H1 (cell line): ENCODE measurements at regions of chr10 and their contacts with region 1.

Region 1: GRCh38 chr10:80855348-80855971 is 317.8 kb downstream of the SH2D4B start:
- DNase-seq: peak; percentile 53 to 77
- H3K4me3 ChIP-seq: no peak overlapping the region
- H3K27ac ChIP-seq: no peak overlapping the region
- H3K4me1 ChIP-seq: no peaks in the 10 kb centered on the region; a peak in 3 of 7 replicates
- H3K27me3 ChIP-seq: no peaks in the 10 kb centered on the region
- CTCF ChIP-seq: peak; percentile 78 to 83 (median 78)
- EP300 ChIP-seq: no peak
- POLR2A ChIP-seq: no peak
- RAD21 ChIP-seq: peak; percentile 74 to 80

Region 2: GRCh38 chr10:80662577-80663261 is 192.7 kb before region 1 on chr10:
- CTCF ChIA-PET with region 1: interaction called, 22 read pairs
- POLR2A ChIA-PET with region 1: no interaction called
- DNase-seq: peak; percentile 75 to 98
- H3K4me3 ChIP-seq: peak overlapping the region in 3 of 4 experiments; percentile 21 to 51 (median 43); a peak in 5 of 8 replicates
- H3K27ac ChIP-seq: no peak overlapping the region
- H3K4me1 ChIP-seq: peaks cover 0 to 4% (median 3%) of the 10 kb centered on the region in 4 experiments; a peak in 3 of 7 replicates
- H3K27me3 ChIP-seq: peaks cover 0 to 2% (median 0%) of the 10 kb centered on the region in 4 experiments; a peak in 2 of 7 replicates
- CTCF ChIP-seq: peak; percentile 83 to 88 (median 86)
- EP300 ChIP-seq: no peak
- POLR2A ChIP-seq: no peak
- RAD21 ChIP-seq: peak; percentile 79 to 82

Region 3: DNA sequence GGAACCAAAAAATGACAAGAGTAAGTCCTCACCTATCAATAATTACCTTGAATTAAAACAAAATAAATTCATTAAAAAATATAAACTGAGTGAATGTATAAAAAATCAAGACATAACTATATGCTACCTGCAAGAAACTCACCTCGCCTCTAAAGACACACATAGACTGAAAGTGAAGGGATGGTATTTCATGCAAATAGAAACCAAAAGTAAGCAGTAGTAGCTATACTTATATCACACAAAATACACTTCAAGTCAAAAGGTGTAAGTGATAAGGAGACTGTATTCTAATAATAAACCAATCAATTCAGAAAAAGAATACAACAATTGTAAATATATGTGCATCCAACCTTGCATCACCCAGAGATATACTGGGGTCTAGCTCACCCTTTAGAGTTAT is 14.8 kb after region 1 on chr10:
- CTCF ChIA-PET with region 1: interaction called, 21 read pairs
- POLR2A ChIA-PET with region 1: no interaction called
- DNase-seq: no peak
- H3K4me3 ChIP-seq: no peak overlapping the region
- H3K27ac ChIP-seq: no peak overlapping the region
- H3K4me1 ChIP-seq: no peaks in the 10 kb centered on the region
- H3K27me3 ChIP-seq: no peaks in the 10 kb centered on the region
- CTCF ChIP-seq: no peak
- EP300 ChIP-seq: no peak
- POLR2A ChIP-seq: no peak
- RAD21 ChIP-seq: no peak

Region 4: GRCh38 chr10:80894797-80895467 is 39.5 kb after region 1 on chr10:
- CTCF ChIA-PET with region 1: interaction called, 30 read pairs
- POLR2A ChIA-PET with region 1: no interaction called
- DNase-seq: peak in 1 of 2 experiments; percentile 71
- H3K4me3 ChIP-seq: peak overlapping the region in 3 of 4 experiments; percentile 0 to 31 (median 11); a peak in 4 of 8 replicates
- H3K27ac ChIP-seq: no peak overlapping the region
- H3K4me1 ChIP-seq: peaks cover 9 to 18% (median 12%) of the 10 kb centered on the region in 4 experiments
- H3K27me3 ChIP-seq: peaks cover 11 to 58% (median 42%) of the 10 kb centered on the region in 4 experiments
- CTCF ChIP-seq: no peak
- EP300 ChIP-seq: no peak
- POLR2A ChIP-seq: no peak
- RAD21 ChIP-seq: no peak

Region 5: GRCh38 chr10:80909254-80909653 is 53.8 kb after region 1 on chr10:
- CTCF ChIA-PET with region 1: interaction called, 18 read pairs
- POLR2A ChIA-PET with region 1: no interaction called
- DNase-seq: no peak
- H3K4me3 ChIP-seq: no peak overlapping the region
- H3K27ac ChIP-seq: no peak overlapping the region
- H3K4me1 ChIP-seq: no peaks in the 10 kb centered on the region
- H3K27me3 ChIP-seq: no peaks in the 10 kb centered on the region
- CTCF ChIP-seq: no peak
- EP300 ChIP-seq: no peak
- POLR2A ChIP-seq: no peak
- RAD21 ChIP-seq: no peak

Region 6: GRCh38 chr10:80938903-80939302 is 83.4 kb after region 1 on chr10:
- CTCF ChIA-PET with region 1: interaction called, 59 read pairs
- POLR2A ChIA-PET with region 1: no interaction called
- DNase-seq: no peak
- H3K4me3 ChIP-seq: no peak overlapping the region
- H3K27ac ChIP-seq: no peak overlapping the region
- H3K4me1 ChIP-seq: no peaks in the 10 kb centered on the region
- H3K27me3 ChIP-seq: peaks cover 0 to 1% (median 0%) of the 10 kb centered on the region in 4 experiments; a peak in 1 of 7 replicates
- CTCF ChIP-seq: no peak
- EP300 ChIP-seq: no peak
- POLR2A ChIP-seq: no peak
- RAD21 ChIP-seq: no peak

Region 7: GRCh38 chr10:80945264-80945880 is 89.9 kb after region 1 on chr10:
- CTCF ChIA-PET with region 1: interaction called, 59 read pairs
- POLR2A ChIA-PET with region 1: no interaction called
- DNase-seq: peak in 1 of 2 experiments; percentile 10
- H3K4me3 ChIP-seq: no peak overlapping the region
- H3K27ac ChIP-seq: no peak overlapping the region
- H3K4me1 ChIP-seq: peaks cover 0 to 5% (median 0%) of the 10 kb centered on the region in 4 experiments; a peak in 1 of 7 replicates
- H3K27me3 ChIP-seq: no peaks in the 10 kb centered on the region
- CTCF ChIP-seq: peak in 2 of 3 experiments; percentile 96 to 97; a peak in 3 of 4 replicates
- EP300 ChIP-seq: no peak
- POLR2A ChIP-seq: no peak
- RAD21 ChIP-seq: peak; percentile 95 to 98